ENCODE measurements at regions of chr7 and their contacts with region 1.

Region 1: GRCh38 chr7:49852619-49853462 is 79.4 kb downstream of the VWC2 start:
- DNase-seq: peak; percentile 77
- H3K4me3 ChIP-seq: no peak overlapping the region
- H3K27ac ChIP-seq: no peak overlapping the region
- H3K4me1 ChIP-seq: peaks cover 2% of the 10 kb centered on the region
- CTCF ChIP-seq: peak; percentile 96

Region 2: GRCh38 chr7:48299580-48300169 is 1553.2 kb before region 1 on chr7:
- CTCF ChIA-PET with region 1: no interaction called
- POLR2A ChIA-PET with region 1: no interaction called
- intact Hi-C with region 1: loop called (anchors 1 kb)
- DNase-seq: peak; percentile 62
- H3K4me3 ChIP-seq: no peak overlapping the region
- H3K27ac ChIP-seq: no peak overlapping the region
- H3K4me1 ChIP-seq: peaks cover 11% of the 10 kb centered on the region
- CTCF ChIP-seq: peak; percentile 90

Region 3: DNA sequence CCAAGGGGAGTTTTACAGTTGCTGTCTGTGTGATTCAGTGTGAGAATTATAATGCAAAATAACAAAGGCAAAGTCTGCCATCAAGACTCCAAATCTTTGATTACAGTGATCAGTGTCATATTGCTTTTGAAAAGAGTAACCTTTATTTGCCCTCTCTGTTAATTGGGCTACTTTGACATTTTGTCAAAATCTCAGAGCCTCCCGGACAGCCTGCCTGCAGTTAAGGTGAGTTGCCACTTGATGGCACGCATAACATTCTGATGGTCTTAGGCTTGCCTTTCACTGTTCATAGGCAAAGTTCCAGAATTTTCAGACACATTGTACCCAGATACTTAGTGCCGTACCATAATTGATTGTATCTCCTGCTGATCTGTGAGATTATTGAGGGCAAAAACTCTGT is 1428.1 kb before region 1 on chr7:
- CTCF ChIA-PET with region 1: no interaction called
- POLR2A ChIA-PET with region 1: no interaction called
- intact Hi-C with region 1: loop called (anchors 5 kb)
- DNase-seq: peak; percentile 57
- H3K4me3 ChIP-seq: no peak overlapping the region
- H3K27ac ChIP-seq: no peak overlapping the region
- H3K4me1 ChIP-seq: peaks cover 28% of the 10 kb centered on the region
- CTCF ChIP-seq: peak; percentile 81

Region 4: GRCh38 chr7:48875045-48875916 is 977.6 kb before region 1 on chr7:
- CTCF ChIA-PET with region 1: no interaction called
- POLR2A ChIA-PET with region 1: no interaction called
- intact Hi-C with region 1: no loop called
- DNase-seq: no peak
- H3K4me3 ChIP-seq: no peak overlapping the region
- H3K27ac ChIP-seq: no peak overlapping the region
- H3K4me1 ChIP-seq: no peaks in the 10 kb centered on the region
- CTCF ChIP-seq: peak; percentile 31; the same call in 1 of the 2 replicates

Region 5: DNA sequence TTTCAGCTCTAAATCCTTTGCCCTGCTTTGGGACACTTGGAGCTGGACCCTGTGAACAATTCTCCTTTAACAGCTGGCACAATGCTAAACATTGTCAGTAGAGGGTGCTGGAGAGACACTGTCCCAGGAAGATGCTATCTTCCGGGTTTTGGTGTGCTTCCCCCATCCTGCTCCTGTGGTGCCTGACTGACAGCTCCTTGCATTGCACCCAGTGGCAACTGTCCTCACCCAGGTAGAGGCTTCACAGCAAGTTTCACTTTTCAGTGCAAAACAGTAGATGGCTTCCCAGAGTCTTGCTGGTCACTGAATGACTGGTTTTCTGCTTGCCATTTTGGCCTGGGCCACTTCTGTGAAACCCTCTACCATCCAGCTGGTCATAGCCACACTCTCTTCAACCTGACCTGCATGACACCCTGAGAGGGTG is 851.2 kb before region 1 on chr7:
- CTCF ChIA-PET with region 1: no interaction called
- POLR2A ChIA-PET with region 1: no interaction called
- intact Hi-C with region 1: loop called (anchors 1 kb)
- DNase-seq: peak; percentile 83
- H3K4me3 ChIP-seq: no peak overlapping the region
- H3K27ac ChIP-seq: no peak overlapping the region
- H3K4me1 ChIP-seq: peaks cover 6% of the 10 kb centered on the region
- CTCF ChIP-seq: peak; percentile 89

Region 6: DNA sequence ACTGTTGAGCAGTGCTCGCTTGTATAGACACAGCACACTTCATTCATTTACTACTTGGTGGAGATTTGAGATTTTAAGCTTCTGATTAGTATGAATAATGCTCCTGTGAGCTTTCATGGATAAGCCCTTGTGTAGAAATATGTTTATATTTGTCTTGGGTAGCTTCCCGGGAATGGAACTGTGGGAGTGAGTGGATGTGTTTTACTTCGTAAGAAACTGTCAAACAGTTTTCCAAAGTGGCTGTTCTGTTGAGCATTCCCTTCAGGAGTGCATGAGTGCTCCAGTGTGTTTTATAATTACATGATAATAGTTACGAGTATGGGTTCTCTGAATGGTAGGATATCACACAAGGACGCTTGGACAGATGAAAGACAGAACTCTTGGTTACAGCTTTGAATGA is 30.0 kb before region 1 on chr7:
- CTCF ChIA-PET with region 1: no interaction called
- POLR2A ChIA-PET with region 1: no interaction called
- intact Hi-C with region 1: no loop called
- DNase-seq: no peak
- H3K4me3 ChIP-seq: no peak overlapping the region
- H3K27ac ChIP-seq: no peak overlapping the region
- H3K4me1 ChIP-seq: no peaks in the 10 kb centered on the region
- CTCF ChIP-seq: no peak

Measured in OCI-LY7 (cell line).